PC-3 (cell line): ENCODE measurements at regions of chr4 and their contacts with region 1.

Region 1: DNA sequence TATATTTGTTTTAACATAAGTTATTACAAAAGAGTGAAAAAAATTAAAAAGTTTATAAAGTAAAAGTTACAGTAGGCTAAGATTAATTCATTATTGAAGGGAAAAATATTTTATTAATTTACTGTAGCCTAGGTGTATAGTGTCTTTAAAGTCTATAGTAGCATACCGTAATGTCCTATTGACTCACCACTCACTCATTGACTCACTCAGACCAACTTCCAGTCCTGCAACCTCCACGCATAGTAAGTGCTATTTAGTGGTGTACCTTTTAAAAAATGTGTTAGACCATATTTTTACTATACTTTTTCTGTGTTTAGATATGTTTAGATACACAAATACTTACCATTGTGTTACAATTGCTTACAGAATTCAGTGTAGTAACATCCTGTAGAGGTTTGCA is 841.1 kb downstream of the CENPC start:
- DNase-seq: peak; percentile 65
- ATAC-seq: peak; percentile 91
- H3K4me3 ChIP-seq: no peak overlapping the region
- H3K27ac ChIP-seq: no peak overlapping the region
- H3K4me1 ChIP-seq: no peaks in the 10 kb centered on the region
- H3K27me3 ChIP-seq: no peaks in the 10 kb centered on the region
- CTCF ChIP-seq: no peak

Region 2: DNA sequence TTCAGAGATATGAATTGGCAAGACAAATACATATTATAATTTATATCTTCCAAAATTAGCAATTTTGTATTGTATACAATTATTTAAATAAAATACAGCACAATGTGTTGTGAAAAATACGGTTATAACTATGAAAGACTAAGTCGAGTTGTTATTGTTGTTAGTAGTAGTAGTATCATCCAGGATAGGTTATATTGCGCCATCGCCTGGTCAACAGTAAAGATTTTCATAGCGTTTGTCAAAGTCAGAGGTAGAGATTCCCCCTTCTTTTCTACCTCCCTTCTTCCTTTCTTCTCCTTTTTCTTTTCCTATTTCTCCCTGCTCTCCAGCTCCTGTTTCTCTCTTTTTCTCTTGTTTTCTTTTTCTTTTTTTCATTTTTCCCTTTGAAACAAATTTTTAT is 534.9 kb before region 1 on chr4:
- CTCF ChIA-PET with region 1: no interaction called
- POLR2A ChIA-PET with region 1: no interaction called
- intact Hi-C with region 1: no loop called
- DNase-seq: peak; percentile 74
- ATAC-seq: peak; percentile 71
- H3K4me3 ChIP-seq: no peak overlapping the region
- H3K27ac ChIP-seq: no peak overlapping the region
- H3K4me1 ChIP-seq: no peaks in the 10 kb centered on the region
- H3K27me3 ChIP-seq: no peaks in the 10 kb centered on the region
- CTCF ChIP-seq: peak; percentile 88

Region 3: GRCh38 chr4:66575024-66575696 is 129.1 kb before region 1 on chr4:
- CTCF ChIA-PET with region 1: no interaction called
- POLR2A ChIA-PET with region 1: no interaction called
- intact Hi-C with region 1: no loop called
- DNase-seq: peak; percentile 98
- ATAC-seq: peak; percentile 83
- H3K4me3 ChIP-seq: peak overlapping the region; percentile 60
- H3K27ac ChIP-seq: peak overlapping the region; percentile 93
- H3K4me1 ChIP-seq: peaks cover 51% of the 10 kb centered on the region
- H3K27me3 ChIP-seq: no peaks in the 10 kb centered on the region
- CTCF ChIP-seq: no peak

Region 4: DNA sequence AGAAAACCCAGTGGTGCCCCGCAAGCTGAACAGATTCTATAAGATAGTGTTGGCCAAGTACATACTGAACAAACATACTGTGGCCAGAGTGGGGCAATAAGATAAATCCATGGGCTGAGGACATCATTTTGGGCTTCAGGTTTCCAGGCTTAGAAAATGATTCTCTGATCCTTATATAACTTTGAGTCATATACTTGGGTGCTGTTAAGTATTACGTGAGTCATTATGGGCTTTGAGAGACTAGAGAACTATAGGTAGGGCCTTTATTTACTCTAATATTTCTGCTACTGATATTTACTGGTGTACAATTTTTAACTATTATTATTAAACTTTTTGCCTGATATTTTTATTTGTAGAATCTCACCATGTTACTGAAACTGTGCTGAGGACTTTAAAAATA is 255.0 kb after region 1 on chr4:
- CTCF ChIA-PET with region 1: no interaction called
- POLR2A ChIA-PET with region 1: interaction called, 5 read pairs
- intact Hi-C with region 1: loop called (anchors 5 kb)
- DNase-seq: peak; percentile 44
- ATAC-seq: peak; percentile 76
- H3K4me3 ChIP-seq: no peak overlapping the region
- H3K27ac ChIP-seq: no peak overlapping the region
- H3K4me1 ChIP-seq: no peaks in the 10 kb centered on the region
- H3K27me3 ChIP-seq: no peaks in the 10 kb centered on the region
- CTCF ChIP-seq: no peak